ENCODE measurements at regions of chr20 and their contacts with region 1.

Region 1: DNA sequence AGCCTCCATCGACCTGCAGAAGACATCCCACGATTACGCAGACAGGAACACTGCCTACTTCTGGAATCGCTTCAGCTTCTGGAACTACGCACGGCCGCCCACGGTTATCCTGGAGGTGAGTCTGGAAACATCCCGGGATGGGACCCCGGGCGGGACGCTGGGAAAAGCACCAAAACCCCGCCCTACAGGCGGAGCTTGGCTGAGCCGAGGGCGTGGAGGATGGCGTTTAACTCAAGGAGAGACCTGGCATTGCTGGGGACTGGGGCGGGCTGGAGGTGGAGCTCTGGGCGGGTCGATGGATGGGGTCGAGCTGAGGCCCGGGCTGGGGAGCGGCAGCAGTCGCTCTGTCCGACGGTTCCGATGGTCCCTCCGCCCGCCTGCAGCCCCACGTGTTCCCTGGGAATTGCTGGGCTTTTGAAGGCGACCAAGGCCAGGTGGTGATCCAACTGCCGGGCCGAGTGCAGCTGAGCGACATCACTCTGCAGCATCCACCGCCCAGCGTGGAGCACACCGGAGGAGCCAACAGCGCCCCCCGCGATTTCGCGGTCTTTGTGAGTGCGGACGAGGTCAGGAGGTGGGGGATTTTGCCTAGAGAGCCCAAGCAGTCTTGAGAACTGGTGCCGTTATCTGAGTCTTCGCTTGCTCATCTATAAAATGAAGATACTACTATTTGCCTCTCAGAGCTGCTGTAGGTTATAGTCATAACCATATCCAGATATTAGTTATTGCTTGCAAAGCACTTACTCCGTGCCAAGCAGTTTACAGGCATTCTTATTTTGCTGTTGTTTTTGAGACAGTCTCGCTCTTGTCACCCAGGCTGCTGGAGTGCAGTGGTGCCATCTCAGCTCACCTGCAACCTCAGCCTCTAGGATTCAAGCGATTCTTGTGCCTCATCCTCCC is 3.8 kb downstream of the SPAG4 start:
- DNase-seq: peak; percentile 94
- H3K4me3 Mint-ChIP-seq: peak overlapping the region; percentile 83
- H3K27ac Mint-ChIP-seq: peak overlapping the region; percentile 90
- H3K4me1 Mint-ChIP-seq: peaks cover 45% of the 10 kb centered on the region
- H3K27me3 Mint-ChIP-seq: peaks cover 2% of the 10 kb centered on the region

Region 2: DNA sequence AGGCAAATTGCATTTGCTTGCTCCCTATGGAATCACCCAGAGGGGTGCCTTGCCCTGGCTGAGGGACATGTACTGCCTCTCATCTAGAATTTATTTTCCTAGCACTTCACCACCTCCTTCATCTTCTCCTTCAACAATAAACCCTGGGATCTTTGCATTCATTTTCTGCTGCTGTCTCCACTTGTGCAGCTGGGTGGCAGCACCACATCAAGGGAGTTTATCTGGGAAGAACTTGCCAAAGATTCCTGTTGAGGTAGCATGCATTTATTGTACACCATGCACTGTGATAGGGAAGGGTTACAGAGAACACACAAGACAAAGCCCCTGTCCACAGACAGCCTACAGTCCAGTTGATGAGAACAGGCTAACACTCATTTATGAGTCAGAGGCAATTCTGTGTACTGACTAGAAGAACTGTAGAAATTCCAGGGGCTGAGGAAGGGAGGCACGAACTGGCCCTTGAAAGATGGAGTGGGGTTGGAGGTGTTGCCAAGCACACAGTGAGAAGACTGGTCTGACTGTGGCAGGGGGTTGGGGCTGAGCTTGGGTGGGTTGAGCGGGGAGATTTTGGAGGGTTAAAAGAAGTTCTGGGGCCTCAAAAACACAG is 107.5 kb before region 1 on chr20:
- CTCF ChIA-PET with region 1: no interaction called
- POLR2A ChIA-PET with region 1: no interaction called
- intact Hi-C with region 1: no loop called
- DNase-seq: no peak
- H3K4me3 Mint-ChIP-seq: no peak overlapping the region
- H3K27ac Mint-ChIP-seq: peak overlapping the region; percentile 11
- H3K4me1 Mint-ChIP-seq: peaks cover 3% of the 10 kb centered on the region
- H3K27me3 Mint-ChIP-seq: no peaks in the 10 kb centered on the region

Region 3: DNA sequence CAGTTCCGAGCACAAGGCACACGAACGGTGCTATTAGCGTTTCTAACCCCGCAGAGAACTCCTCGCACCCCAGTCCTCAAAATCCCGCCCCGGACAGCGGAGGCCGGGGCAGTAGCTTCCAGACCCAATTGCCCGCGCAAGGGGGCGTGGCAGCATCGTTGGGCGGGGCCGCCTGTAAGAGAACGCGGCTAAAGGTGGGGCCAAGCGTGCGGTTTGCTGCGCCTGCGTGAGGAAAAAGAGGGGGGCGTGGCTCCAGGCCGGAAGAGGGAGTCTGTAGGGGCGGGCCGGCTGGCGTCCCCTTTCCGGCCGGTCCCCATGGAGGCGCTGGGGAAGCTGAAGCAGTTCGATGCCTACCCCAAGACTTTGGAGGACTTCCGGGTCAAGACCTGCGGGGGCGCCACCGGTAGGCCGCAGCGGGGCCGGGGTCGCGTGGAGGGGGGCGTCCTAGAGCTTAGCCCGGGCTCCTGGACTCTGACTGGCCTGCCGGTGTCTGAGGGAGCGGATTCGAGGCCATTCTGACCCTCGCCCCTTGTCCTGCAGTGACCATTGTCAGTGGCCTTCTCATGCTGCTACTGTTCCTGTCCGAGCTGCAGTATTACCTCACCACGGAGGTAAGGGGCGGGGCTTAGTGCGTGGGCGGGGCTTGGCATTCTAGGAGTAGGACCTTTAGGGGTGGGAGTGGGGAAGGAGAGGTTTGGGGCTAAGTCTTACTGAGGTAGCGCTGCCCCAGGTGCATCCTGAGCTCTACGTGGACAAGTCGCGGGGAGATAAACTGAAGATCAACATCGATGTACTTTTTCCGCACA is 77.5 kb before region 1 on chr20 and contains the start of gene ERGIC3:
- CTCF ChIA-PET with region 1: no interaction called
- POLR2A ChIA-PET with region 1: interaction called, 13 read pairs
- intact Hi-C with region 1: loop called (anchors 1 kb)
- DNase-seq: peak; percentile 99
- H3K4me3 Mint-ChIP-seq: peak within 1 kb of the TSS; percentile 86
- H3K27ac Mint-ChIP-seq: peak within 1 kb of the TSS; percentile 79
- H3K4me1 Mint-ChIP-seq: peaks cover 20% of the 10 kb centered on the region
- H3K27me3 Mint-ChIP-seq: no peaks in the 10 kb centered on the region
- total RNA-seq, gene ERGIC3: 109 to 120 TPM

Region 4: DNA sequence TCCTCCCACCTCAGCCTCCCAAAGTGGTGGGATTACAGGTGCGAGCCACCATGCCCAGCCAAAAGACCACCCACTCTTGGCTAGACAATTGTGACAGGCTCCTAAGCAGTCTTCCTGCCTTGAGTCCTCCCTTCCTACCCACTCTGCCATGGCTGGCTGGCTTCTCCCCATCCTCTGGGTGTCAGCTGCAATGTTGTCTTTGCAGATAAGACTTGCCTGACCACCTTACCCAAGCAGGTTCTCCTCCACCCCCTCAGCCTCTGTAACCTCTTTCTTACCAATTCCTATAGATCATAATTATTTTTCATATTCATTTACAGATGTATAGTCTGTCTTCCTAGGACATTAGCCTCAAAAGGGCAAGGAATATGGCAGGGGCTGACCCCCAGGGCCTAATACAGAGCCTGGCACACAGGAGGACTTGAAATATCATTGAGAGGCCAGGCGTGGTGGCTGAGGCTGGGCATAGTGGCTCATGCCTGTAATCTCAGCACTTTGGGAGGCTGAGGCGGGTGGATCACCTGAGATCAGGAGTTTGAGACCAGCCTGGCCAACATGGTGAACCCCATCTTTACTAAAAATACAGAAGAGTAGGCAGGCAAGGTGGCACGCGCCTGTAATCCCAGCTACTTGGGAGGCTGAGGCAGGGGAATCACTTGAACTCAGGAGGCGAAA is 32.6 kb before region 1 on chr20:
- CTCF ChIA-PET with region 1: no interaction called
- POLR2A ChIA-PET with region 1: no interaction called
- intact Hi-C with region 1: no loop called
- DNase-seq: no peak
- H3K4me3 Mint-ChIP-seq: no peak overlapping the region
- H3K27ac Mint-ChIP-seq: no peak overlapping the region
- H3K4me1 Mint-ChIP-seq: no peaks in the 10 kb centered on the region
- H3K27me3 Mint-ChIP-seq: no peaks in the 10 kb centered on the region

Region 5: GRCh38 chr20:35699127-35699975 is 79.9 kb after region 1 on chr20 and contains the starts of genes NFS1 and ROMO1:
- CTCF ChIA-PET with region 1: no interaction called
- POLR2A ChIA-PET with region 1: interaction called, 3 read pairs
- intact Hi-C with region 1: loop called (anchors 1 kb)
- DNase-seq: peak; percentile 91
- H3K4me3 Mint-ChIP-seq: peak within 1 kb of the TSS; percentile 88
- H3K27ac Mint-ChIP-seq: peak within 1 kb of the TSS; percentile 91
- H3K4me1 Mint-ChIP-seq: peaks cover 50% of the 10 kb centered on the region
- H3K27me3 Mint-ChIP-seq: no peaks in the 10 kb centered on the region
- total RNA-seq, gene NFS1: 36.9 to 40.8 TPM
- total RNA-seq, gene ROMO1: 141 to 142 TPM

Region 6: GRCh38 chr20:35954200-35954906 is 334.9 kb after region 1 on chr20 and contains the start of gene SCAND1:
- CTCF ChIA-PET with region 1: interaction called, 9 read pairs
- POLR2A ChIA-PET with region 1: interaction called, 10 read pairs
- intact Hi-C with region 1: loop called (anchors 1 kb)
- DNase-seq: peak; percentile 98
- H3K4me3 Mint-ChIP-seq: peak within 1 kb of the TSS; percentile 100
- H3K27ac Mint-ChIP-seq: peak within 1 kb of the TSS; percentile 99
- H3K4me1 Mint-ChIP-seq: peaks cover 14% of the 10 kb centered on the region
- H3K27me3 Mint-ChIP-seq: no peaks in the 10 kb centered on the region
- total RNA-seq, gene SCAND1: 45.4 to 51.3 TPM

Measured in activated CD4-positive, alpha-beta memory T cell treated with anti-CD3 and anti-CD28 coated beads for 36 hours (primary cell).